Activated T-helper 2 cell treated with anti-CD3 and anti-CD28 coated beads, Interferon-gamma antibody, Interleukin-2, Interleukin-4, amounts not matched to agents 10 μg/mL and 5 μg/mL and 100 μg/mL, durations not matched to agents 14 hours and 24 hours and 36 hours (primary cell): ENCODE measurements at regions of chr20 and their contacts with region 1.

Region 1: DNA sequence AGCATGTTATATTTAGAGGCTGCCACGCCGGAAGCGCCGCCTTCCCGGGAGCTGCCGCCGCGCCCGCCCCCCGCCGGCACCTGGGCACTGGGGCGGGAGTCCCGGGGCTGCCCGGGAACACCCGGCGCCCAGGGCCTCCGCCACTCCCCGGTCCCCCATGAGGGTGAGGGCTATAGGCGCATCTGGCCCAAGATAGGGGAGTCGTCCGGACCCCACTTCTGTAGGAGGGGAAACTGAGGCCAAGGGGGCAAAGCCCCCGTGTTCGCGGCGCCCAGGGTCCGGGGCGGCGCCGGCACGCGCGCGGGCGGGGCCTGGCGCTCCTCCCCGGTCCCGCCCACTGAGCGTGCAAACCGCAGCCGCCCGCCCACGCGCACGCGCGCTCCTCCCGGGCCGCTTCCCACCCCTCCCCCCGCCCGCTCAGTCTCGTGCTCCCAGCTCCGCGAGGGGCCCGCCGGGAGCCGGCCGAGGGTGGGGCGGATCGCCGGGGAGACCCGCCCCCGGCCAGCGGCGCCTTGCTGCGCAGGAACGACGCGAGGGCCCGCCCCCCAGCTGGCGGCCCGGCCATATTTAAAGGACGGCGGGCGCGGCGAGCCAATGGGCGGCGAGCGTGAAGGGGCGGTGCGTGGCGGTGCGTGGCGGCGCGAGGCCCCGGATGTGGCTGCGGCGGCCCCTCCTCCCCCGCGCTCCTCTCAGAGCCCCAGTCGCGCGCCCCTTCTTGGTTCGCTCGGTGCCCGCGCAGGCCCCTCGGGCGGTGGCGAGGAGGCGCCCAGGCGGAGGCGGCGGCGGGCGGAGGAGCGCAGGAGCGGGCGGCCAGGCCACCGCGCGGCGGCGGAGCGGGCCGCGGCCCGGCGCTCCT is at the start of gene LSM14B:
- DNase-seq: peak; percentile 94
- H3K4me3 Mint-ChIP-seq: peak within 1 kb of the TSS; percentile 86
- H3K27ac Mint-ChIP-seq: peak within 1 kb of the TSS; percentile 88
- H3K4me1 Mint-ChIP-seq: peaks cover 30% of the 10 kb centered on the region
- H3K27me3 Mint-ChIP-seq: no peaks in the 10 kb centered on the region
- total RNA-seq, gene LSM14B: 42.9 and 45.0 TPM in 2 replicates

Region 2: DNA sequence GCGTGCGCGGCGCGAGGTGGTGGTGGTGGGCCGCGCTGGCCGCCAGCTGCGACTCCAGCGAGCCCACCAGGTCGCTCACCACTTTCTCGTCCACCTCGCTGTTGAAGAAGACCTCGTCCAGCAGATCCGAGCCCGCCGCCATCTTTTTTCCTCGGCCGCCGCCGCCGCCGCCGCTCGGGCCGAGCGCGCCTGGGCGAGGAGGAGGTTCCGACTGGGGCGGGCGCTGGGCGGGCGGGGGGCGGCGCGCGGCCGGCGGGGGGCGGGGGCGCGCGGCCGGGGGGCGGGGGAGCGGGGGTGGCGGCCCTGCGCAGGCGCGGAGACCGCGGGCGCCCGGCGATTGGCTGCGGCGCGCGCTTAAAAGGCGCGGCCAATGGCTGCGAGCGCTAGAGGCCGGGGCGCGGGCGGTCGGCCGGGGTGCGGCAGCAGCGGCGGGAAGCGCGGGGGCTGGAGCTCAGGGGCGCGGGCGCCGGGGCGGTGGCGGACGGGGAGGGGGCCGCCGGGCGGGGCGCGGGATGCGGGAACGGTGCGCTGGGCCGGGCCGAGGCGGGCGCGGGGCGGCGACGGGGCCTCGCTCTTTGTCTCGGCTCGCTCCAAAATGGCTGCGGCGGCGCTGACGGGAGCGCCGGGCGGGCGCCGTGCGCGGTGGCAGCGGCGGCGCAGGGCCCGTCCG is 56.2 kb before region 1 on chr20 and contains the start of gene TAF4:
- intact Hi-C with region 1: loop called (anchors 1 kb)
- DNase-seq: peak; percentile 80
- H3K4me3 Mint-ChIP-seq: peak within 1 kb of the TSS; percentile 79
- H3K27ac Mint-ChIP-seq: peak within 1 kb of the TSS; percentile 80
- H3K4me1 Mint-ChIP-seq: peaks cover 32% of the 10 kb centered on the region
- H3K27me3 Mint-ChIP-seq: peaks cover 8% of the 10 kb centered on the region
- total RNA-seq, gene TAF4: 23.6 and 26.9 TPM in 2 replicates

Region 3: GRCh38 chr20:62182613-62183425 is 60.8 kb after region 1 on chr20 and contains the start of gene MTG2:
- intact Hi-C with region 1: loop called (anchors 2 kb)
- DNase-seq: peak; percentile 93
- H3K4me3 Mint-ChIP-seq: peak within 1 kb of the TSS; percentile 91
- H3K27ac Mint-ChIP-seq: peak within 1 kb of the TSS; percentile 89
- H3K4me1 Mint-ChIP-seq: peaks cover 24% of the 10 kb centered on the region
- H3K27me3 Mint-ChIP-seq: no peaks in the 10 kb centered on the region
- total RNA-seq, gene MTG2: 34.0 and 40.2 TPM in 2 replicates

Region 4: GRCh38 chr20:62237801-62238571 is 116.0 kb after region 1 on chr20 and contains the start of gene OSBPL2:
- intact Hi-C with region 1: loop called (anchors 1 kb)
- DNase-seq: peak; percentile 100
- H3K4me3 Mint-ChIP-seq: peak within 1 kb of the TSS; percentile 78
- H3K27ac Mint-ChIP-seq: peak within 1 kb of the TSS; percentile 60
- H3K4me1 Mint-ChIP-seq: peaks cover 17% of the 10 kb centered on the region
- H3K27me3 Mint-ChIP-seq: no peaks in the 10 kb centered on the region
- total RNA-seq, gene OSBPL2: 29.3 and 29.9 TPM in 2 replicates